Endothelial cell of umbilical vein (primary cell): ENCODE measurements at regions of chr20 and their contacts with region 1.

Region 1: GRCh38 chr20:61436678-61437279 is 184.7 kb downstream of the CDH4 start:
- DNase-seq: no peak
- H3K4me3 ChIP-seq: no peak overlapping the region
- H3K27ac ChIP-seq: no peak overlapping the region
- H3K4me1 ChIP-seq: no peaks in the 10 kb centered on the region
- H3K27me3 ChIP-seq: no peaks in the 10 kb centered on the region
- CTCF ChIP-seq: no peak
- POLR2A ChIP-seq: no peak

Region 2: DNA sequence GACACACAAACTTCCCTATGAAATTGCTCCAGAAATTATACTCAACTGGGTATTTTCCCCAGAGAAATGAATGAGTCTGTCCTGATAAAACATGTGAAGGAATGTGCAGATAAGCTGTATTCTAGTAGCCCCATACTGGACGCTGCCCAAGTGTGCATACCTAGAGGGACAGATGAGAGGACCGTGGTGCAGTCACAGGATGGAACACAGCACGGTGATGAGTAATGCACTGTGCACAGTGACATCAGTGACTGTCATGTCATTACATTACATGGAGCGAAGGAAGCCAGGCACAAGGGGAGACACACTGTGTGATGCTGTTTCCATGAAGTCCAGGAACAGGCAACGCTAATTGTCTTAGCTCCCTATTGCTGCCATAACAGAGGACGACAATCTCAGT is 29.2 kb before region 1 on chr20:
- CTCF ChIA-PET with region 1: no interaction called
- POLR2A ChIA-PET with region 1: no interaction called
- dilution Hi-C with region 1: no loop called
- intact Hi-C with region 1: loop called (anchors 2 kb)
- DNase-seq: no peak
- H3K4me3 ChIP-seq: no peak overlapping the region
- H3K27ac ChIP-seq: no peak overlapping the region
- H3K4me1 ChIP-seq: no peaks in the 10 kb centered on the region
- H3K27me3 ChIP-seq: no peaks in the 10 kb centered on the region
- CTCF ChIP-seq: no peak
- POLR2A ChIP-seq: no peak

Region 3: DNA sequence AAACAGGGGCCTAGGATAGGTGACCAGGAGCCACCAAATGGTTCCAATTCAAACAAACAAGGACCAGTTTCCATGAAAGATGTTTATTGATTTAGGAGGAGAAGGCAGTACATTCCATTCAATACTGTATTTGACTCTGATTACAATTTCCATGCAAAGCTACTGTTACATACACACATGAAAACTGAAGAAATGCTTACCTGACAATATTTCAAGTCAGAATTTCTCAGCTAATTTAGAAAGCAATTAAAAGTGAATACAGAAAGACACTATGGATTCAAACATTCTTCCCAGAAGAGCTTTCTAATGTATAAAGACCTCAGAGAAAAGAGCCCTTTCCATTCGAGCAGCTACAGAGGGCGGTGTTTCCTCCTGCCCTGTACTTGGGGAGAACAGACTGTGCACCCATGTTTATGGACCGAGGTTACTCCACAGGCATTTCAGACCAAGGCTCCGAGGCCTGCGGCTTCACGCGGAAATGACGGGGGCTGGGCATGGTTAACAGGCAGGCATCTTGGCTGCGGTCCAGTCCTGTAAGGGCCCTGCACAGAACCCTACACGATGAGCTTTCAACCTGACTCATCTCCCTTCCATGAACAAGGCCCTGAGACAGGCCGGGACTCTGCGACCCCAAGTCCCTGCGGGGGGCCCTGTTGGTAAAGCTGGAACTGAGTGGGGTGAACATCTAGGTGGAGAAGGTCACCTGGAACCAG is 1450.5 kb after region 1 on chr20:
- CTCF ChIA-PET with region 1: no interaction called
- POLR2A ChIA-PET with region 1: no interaction called
- dilution Hi-C with region 1: no loop called
- intact Hi-C with region 1: no loop called
- DNase-seq: peak; percentile 23
- H3K4me3 ChIP-seq: no peak overlapping the region
- H3K27ac ChIP-seq: no peak overlapping the region
- H3K4me1 ChIP-seq: no peaks in the 10 kb centered on the region
- H3K27me3 ChIP-seq: no peaks in the 10 kb centered on the region
- CTCF ChIP-seq: no peak
- POLR2A ChIP-seq: no peak